Gastrocnemius medialis (tissue), 4 donors: ENCODE measurements at regions of chr1 and their contacts with region 1.

Region 1: DNA sequence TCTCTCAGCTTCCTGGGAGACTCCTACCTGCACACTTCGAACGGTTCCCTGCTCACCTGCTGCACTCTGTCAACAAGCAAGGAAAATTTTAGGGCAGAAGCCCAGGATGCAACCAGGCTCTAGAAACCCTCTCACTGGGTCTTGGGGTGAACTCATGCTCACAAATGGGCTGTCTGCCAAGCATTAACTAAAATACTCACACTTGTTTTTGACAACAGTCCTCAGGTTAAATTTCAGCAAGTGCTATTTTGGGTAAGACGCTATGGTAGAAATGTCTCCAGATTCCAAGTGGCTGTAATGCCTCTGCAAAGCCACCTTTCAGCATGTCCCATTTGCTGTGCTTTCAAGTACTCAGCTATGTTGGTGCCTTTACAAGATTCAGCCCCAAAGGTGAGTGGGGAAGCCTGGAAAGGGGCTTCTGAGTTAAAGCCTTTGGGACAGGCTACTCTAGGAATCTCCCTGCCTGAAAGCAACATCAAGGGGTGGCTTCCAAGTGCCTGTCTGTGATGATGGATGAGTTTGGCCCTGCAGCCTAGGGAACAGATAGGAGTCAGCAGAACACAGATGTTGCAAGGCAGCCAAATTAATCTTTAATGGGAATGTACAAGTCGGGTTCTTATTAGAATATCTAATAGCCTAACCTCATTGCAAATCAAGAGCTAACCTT is 211.9 kb upstream of the SPAG17 start:
- DNase-seq: peak; percentile 46 to 65
- ATAC-seq: peak; percentile 89
- H3K4me3 ChIP-seq: peak overlapping the region in 1 of 4 donors; percentile 15
- H3K27ac ChIP-seq: peak overlapping the region in 3 of 4 donors; percentile 60 to 69 (median 68)
- H3K4me1 ChIP-seq: peaks cover 25 to 37% of the 10 kb centered on the region in 2 donors
- H3K27me3 ChIP-seq: no peaks in the 10 kb centered on the region
- CTCF ChIP-seq: no peak
- POLR2A ChIP-seq: no peak

Region 2: GRCh38 chr1:117860896-117861610 is 535.9 kb before region 1 on chr1:
- in situ Hi-C with region 1: no loop called
- intact Hi-C with region 1: no loop called
- DNase-seq: no peak
- ATAC-seq: no peak
- H3K4me3 ChIP-seq: no peak overlapping the region
- H3K27ac ChIP-seq: no peak overlapping the region
- H3K4me1 ChIP-seq: no peaks in the 10 kb centered on the region
- H3K27me3 ChIP-seq: no peaks in the 10 kb centered on the region
- CTCF ChIP-seq: no peak
- POLR2A ChIP-seq: no peak

Region 3: GRCh38 chr1:118049981-118050380 is 347.0 kb before region 1 on chr1:
- in situ Hi-C with region 1: no loop called
- intact Hi-C with region 1: no loop called
- DNase-seq: no peak
- ATAC-seq: no peak
- H3K4me3 ChIP-seq: no peak overlapping the region
- H3K27ac ChIP-seq: no peak overlapping the region
- H3K4me1 ChIP-seq: no peaks in the 10 kb centered on the region
- H3K27me3 ChIP-seq: no peaks in the 10 kb centered on the region
- CTCF ChIP-seq: no peak
- POLR2A ChIP-seq: no peak

Region 4: DNA sequence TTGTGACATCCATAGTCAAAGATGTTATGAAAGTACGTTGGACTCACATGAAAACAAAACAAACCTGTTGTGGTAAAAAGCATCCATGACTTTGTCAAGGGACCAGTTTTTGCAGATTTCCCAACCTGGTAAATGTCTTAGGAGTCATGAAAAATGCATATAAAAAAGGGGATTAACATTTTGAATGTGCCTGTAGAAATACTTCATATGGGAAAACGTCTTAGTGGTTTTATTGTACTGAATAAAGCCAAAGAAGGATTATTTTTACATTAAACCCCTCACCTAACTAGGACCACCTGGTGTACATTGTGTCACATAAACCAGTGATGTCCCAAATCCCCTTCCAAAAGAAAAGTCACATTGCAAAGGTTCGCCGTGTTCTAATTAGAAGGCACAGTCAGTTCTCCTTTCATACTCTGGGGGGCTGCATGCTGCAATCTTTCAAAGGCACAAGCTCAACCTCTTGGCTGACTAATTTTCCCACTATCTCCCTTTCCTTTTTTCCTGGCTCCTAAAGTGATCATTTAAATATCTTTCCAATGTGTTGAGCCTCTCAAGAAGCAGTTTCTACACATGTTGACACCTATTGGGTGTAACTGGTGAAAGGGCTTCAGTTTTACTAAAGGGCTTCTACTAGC is 92.1 kb before region 1 on chr1:
- in situ Hi-C with region 1: no loop called
- intact Hi-C with region 1: loop called (anchors 5 kb)
- DNase-seq: peak in 1 of 2 donors; percentile 52
- ATAC-seq: peak; percentile 24 to 42
- H3K4me3 ChIP-seq: no peak overlapping the region
- H3K27ac ChIP-seq: peak overlapping the region; percentile 84 to 99 (median 89)
- H3K4me1 ChIP-seq: peaks cover 52 to 53% of the 10 kb centered on the region in 2 donors
- H3K27me3 ChIP-seq: no peaks in the 10 kb centered on the region
- CTCF ChIP-seq: peak; percentile 35 to 75 (median 60)
- POLR2A ChIP-seq: no peak

Region 5: DNA sequence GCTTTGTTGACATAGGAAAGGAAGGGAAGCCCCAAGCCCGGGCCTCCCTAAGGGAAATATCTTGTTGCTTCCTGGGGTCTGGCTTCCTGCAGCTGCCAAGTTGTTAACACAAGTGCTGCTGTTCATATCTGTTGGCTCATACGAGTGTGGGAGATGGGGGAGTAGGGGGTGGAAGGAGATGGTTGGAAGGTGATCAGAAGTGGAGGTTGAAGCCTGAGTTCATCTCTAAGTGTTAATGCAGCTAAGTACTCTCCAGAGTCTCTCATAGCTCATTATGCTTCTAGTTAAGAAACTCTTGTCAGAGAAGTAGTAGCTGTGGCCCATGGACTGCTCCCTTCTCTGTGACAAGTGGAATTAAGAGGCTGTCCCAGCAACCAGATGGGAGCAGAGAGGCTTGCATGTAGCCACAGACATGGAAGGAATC is 107.3 kb after region 1 on chr1:
- in situ Hi-C with region 1: no loop called
- intact Hi-C with region 1: loop called (anchors 10 kb)
- DNase-seq: no peak
- ATAC-seq: peak; percentile 65 to 71
- H3K4me3 ChIP-seq: no peak overlapping the region
- H3K27ac ChIP-seq: peak overlapping the region; percentile 67 to 85 (median 76)
- H3K4me1 ChIP-seq: peaks cover 28 to 31% of the 10 kb centered on the region in 2 donors
- H3K27me3 ChIP-seq: no peaks in the 10 kb centered on the region
- CTCF ChIP-seq: no peak
- POLR2A ChIP-seq: no peak